ENCODE measurements at regions of chr3 and their contacts with region 1.

Region 1: GRCh38 chr3:184543843-184544512 is 17.6 kb upstream of the EPHB3 start:
- DNase-seq: peak; percentile 86
- ATAC-seq: peak; percentile 82
- H3K4me3 Mint-ChIP-seq: no peak overlapping the region
- H3K27ac Mint-ChIP-seq: no peak overlapping the region
- H3K4me1 Mint-ChIP-seq: peaks cover 10% of the 10 kb centered on the region
- H3K27me3 Mint-ChIP-seq: peaks cover 7% of the 10 kb centered on the region

Region 2: GRCh38 chr3:183895296-183895695 is 648.7 kb before region 1 on chr3:
- CTCF ChIA-PET with region 1: interaction called, 3 read pairs
- POLR2A ChIA-PET with region 1: no interaction called
- intact Hi-C with region 1: loop called in 1 of 2 experiments (anchors 5 kb)
- DNase-seq: peak; percentile 38
- ATAC-seq: peak; percentile 59
- H3K4me3 Mint-ChIP-seq: no peak overlapping the region
- H3K27ac Mint-ChIP-seq: no peak overlapping the region
- H3K4me1 Mint-ChIP-seq: no peaks in the 10 kb centered on the region
- H3K27me3 Mint-ChIP-seq: peaks cover 7% of the 10 kb centered on the region

Region 3: DNA sequence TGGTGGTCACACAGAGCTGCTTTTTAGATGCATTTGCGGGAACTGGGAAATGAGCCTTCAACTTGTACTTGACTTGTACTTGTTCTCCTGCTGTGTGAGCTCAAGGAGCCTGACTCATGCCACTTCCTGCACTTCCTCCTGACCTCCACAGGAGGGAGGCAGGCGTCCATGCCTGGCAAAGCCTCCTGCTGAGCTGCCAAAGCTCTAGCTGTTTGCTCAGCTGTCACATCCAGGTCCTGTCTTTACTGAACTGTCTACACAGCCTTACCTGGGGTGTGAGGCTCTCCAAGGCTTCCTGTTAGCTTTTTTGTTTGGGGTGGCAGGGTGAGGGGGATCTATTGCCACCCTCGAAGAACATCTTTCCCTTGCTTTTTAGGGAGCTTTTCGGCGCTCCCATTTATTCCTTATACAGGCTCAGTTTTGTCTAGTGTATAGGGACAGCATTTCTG is 172.4 kb before region 1 on chr3:
- CTCF ChIA-PET with region 1: interaction called, 128 read pairs
- POLR2A ChIA-PET with region 1: no interaction called
- intact Hi-C with region 1: loop called (anchors 1 kb)
- DNase-seq: peak; percentile 81
- ATAC-seq: peak; percentile 95
- H3K4me3 Mint-ChIP-seq: no peak overlapping the region
- H3K27ac Mint-ChIP-seq: no peak overlapping the region
- H3K4me1 Mint-ChIP-seq: peaks cover 16% of the 10 kb centered on the region
- H3K27me3 Mint-ChIP-seq: peaks cover 3% of the 10 kb centered on the region

Region 4: DNA sequence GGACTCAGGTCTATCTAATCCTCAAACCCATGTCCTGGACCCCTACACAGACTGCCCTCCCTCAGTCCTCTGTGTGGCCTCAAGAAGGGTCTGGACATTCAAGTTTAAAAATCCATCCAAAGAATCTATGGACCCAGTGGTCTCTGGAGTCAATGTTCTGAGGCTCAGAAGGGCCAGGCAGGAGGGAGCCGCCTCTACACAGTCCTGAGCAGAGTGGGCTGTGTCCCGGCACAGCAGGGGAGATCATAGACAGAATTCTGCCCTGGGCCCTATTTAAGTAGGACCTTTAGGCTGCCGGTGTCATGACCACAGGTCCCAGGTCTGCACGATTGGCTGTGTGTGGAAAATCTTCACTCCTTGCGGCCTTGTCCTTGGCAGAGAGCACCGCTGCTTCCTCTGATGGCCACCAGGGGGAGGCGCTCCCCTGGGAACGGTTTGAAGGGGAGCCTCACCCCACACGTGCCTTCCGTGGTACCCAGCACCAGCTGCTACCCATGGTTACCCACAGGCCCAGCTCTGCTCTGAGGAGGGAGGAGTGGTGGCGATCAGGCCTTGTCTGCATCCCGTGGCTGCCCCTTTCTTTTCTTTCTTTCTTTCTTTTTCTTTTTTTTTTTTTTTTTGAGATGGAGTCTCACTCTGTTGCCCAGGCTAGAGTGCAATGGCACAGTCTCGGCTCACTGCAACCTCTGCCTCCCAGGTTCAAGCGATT is 126.2 kb before region 1 on chr3:
- CTCF ChIA-PET with region 1: interaction called, 47 read pairs
- POLR2A ChIA-PET with region 1: no interaction called
- intact Hi-C with region 1: loop called (anchors 1 kb)
- DNase-seq: peak; percentile 86
- ATAC-seq: peak; percentile 97
- H3K4me3 Mint-ChIP-seq: no peak overlapping the region
- H3K27ac Mint-ChIP-seq: no peak overlapping the region
- H3K4me1 Mint-ChIP-seq: peaks cover 2% of the 10 kb centered on the region
- H3K27me3 Mint-ChIP-seq: no peaks in the 10 kb centered on the region

Region 5: GRCh38 chr3:184469423-184469822 is 74.6 kb before region 1 on chr3:
- CTCF ChIA-PET with region 1: interaction called, 7 read pairs
- POLR2A ChIA-PET with region 1: interaction called, 4 read pairs
- intact Hi-C with region 1: loop called (anchors 1 kb)
- DNase-seq: peak; percentile 73
- ATAC-seq: no peak
- H3K4me3 Mint-ChIP-seq: no peak overlapping the region
- H3K27ac Mint-ChIP-seq: no peak overlapping the region
- H3K4me1 Mint-ChIP-seq: peaks cover 16% of the 10 kb centered on the region
- H3K27me3 Mint-ChIP-seq: peaks cover 10% of the 10 kb centered on the region

Region 6: DNA sequence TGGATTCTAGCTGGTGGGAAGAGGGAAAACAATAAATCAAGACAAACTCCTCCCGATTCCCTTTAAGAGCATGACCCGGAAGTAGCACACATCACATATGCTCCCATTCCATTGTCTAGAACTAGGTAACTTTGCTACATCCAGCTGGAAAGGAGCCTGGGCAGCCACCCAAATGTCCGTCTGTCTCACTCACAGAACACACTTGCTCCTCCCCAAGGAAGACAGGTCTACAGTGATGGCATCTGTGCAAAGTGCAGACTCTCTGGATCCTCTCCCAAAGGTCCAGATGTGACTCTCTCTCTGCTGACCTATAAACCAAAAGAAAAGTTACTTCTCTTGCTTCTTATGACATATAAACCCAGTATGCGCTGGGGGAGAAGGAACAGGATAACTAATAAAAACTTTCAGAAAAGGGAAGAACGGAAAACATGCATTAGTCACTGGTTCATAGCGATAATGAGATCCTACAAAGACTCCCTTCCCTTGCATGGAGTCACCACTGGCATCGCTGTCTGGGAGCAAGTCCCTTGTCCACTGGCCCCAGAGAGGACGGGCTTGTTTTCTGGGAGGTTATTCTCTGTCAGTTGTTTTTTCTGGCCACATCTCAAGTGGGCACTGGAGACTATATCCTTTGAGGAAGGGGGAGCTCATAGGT is 12.2 kb before region 1 on chr3:
- CTCF ChIA-PET with region 1: interaction called, 10 read pairs
- POLR2A ChIA-PET with region 1: no interaction called
- intact Hi-C with region 1: no loop called
- DNase-seq: no peak
- ATAC-seq: no peak
- H3K4me3 Mint-ChIP-seq: no peak overlapping the region
- H3K27ac Mint-ChIP-seq: no peak overlapping the region
- H3K4me1 Mint-ChIP-seq: no peaks in the 10 kb centered on the region
- H3K27me3 Mint-ChIP-seq: peaks cover 17% of the 10 kb centered on the region

Region 7: GRCh38 chr3:184645336-184645735 is 101.4 kb after region 1 on chr3:
- CTCF ChIA-PET with region 1: no interaction called
- POLR2A ChIA-PET with region 1: no interaction called
- intact Hi-C with region 1: no loop called
- DNase-seq: no peak
- ATAC-seq: no peak
- H3K4me3 Mint-ChIP-seq: no peak overlapping the region
- H3K27ac Mint-ChIP-seq: no peak overlapping the region
- H3K4me1 Mint-ChIP-seq: no peaks in the 10 kb centered on the region
- H3K27me3 Mint-ChIP-seq: no peaks in the 10 kb centered on the region

Region 8: GRCh38 chr3:184672977-184673870 is 129.2 kb after region 1 on chr3:
- CTCF ChIA-PET with region 1: no interaction called
- POLR2A ChIA-PET with region 1: no interaction called
- intact Hi-C with region 1: no loop called
- DNase-seq: no peak
- ATAC-seq: no peak
- H3K4me3 Mint-ChIP-seq: no peak overlapping the region
- H3K27ac Mint-ChIP-seq: no peak overlapping the region
- H3K4me1 Mint-ChIP-seq: no peaks in the 10 kb centered on the region
- H3K27me3 Mint-ChIP-seq: peaks cover 5% of the 10 kb centered on the region

Region 9: GRCh38 chr3:184777336-184778004 is 233.5 kb after region 1 on chr3:
- CTCF ChIA-PET with region 1: interaction called, 4 read pairs
- POLR2A ChIA-PET with region 1: no interaction called
- intact Hi-C with region 1: loop called in 1 of 2 experiments (anchors 1 kb)
- DNase-seq: peak; percentile 91
- ATAC-seq: peak; percentile 99
- H3K4me3 Mint-ChIP-seq: no peak overlapping the region
- H3K27ac Mint-ChIP-seq: no peak overlapping the region
- H3K4me1 Mint-ChIP-seq: no peaks in the 10 kb centered on the region
- H3K27me3 Mint-ChIP-seq: peaks cover 10% of the 10 kb centered on the region

Measured in activated CD4-positive, alpha-beta T cell treated with anti-CD3 and anti-CD28 coated beads for 36 hours (primary cell).